Activated CD4-positive, alpha-beta T cell treated with anti-CD3 and anti-CD28 coated beads for 36 hours (primary cell): ENCODE measurements at regions of chr4 and their contacts with region 1.

Region 1: GRCh38 chr4:18021722-18022571 is at the start of gene LCORL:
- DNase-seq: peak; percentile 91
- ATAC-seq: peak; percentile 88
- H3K4me3 Mint-ChIP-seq: peak within 1 kb of the TSS; percentile 98
- H3K27ac Mint-ChIP-seq: peak within 1 kb of the TSS; percentile 91
- H3K4me1 Mint-ChIP-seq: peaks cover 13% of the 10 kb centered on the region
- H3K27me3 Mint-ChIP-seq: peaks cover 25% of the 10 kb centered on the region
- total RNA-seq, gene LCORL: 6.7 to 8.0 TPM

Region 2: GRCh38 chr4:17511950-17512795 is 509.8 kb before region 1 on chr4 and contains the start of gene QDPR:
- CTCF ChIA-PET with region 1: no interaction called
- POLR2A ChIA-PET with region 1: no interaction called
- intact Hi-C with region 1: loop called (anchors 5 kb)
- DNase-seq: peak; percentile 88
- ATAC-seq: peak; percentile 95
- H3K4me3 Mint-ChIP-seq: peak within 1 kb of the TSS; percentile 78
- H3K27ac Mint-ChIP-seq: peak within 1 kb of the TSS; percentile 85
- H3K4me1 Mint-ChIP-seq: peaks cover 23% of the 10 kb centered on the region
- H3K27me3 Mint-ChIP-seq: no peaks in the 10 kb centered on the region
- total RNA-seq, gene QDPR: 34.5 to 34.6 TPM

Region 3: DNA sequence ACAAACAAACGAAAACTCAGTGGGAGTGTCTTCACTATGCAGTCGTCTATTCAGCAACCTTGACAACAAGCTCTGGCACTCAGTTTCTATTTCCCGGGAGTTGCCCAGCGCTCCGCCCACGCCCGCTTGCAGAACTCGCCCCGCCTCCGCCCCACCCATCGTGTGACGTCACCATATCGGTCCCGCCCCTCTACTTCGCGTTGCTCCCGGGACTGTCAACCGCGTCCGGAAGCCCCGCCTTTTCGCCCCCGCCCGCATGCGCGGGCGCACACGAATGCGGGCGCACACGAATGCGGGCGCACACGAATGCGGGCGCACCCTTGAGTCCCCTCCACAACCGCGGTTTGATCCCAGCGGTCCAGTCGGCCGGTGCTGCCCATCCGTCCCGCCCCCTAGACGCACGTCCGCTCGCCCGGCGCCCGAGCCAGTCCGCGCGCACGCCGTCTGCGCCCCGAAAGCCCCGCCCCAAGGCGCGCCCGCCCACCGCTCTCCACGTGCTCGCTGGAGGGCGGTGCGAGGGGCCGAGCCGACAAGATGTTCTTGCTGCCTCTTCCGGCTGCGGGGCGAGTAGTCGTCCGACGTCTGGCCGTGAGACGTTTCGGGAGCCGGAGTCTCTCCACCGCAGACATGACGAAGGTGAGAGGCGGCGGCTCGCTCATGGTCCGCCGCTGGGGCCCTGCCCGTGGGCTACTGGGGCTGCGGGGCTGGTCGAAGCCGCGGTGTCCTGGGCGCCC is 444.8 kb before region 1 on chr4 and contains the start of gene LAP3:
- CTCF ChIA-PET with region 1: no interaction called
- POLR2A ChIA-PET with region 1: no interaction called
- intact Hi-C with region 1: loop called (anchors 1 kb)
- DNase-seq: peak; percentile 99
- ATAC-seq: peak; percentile 85
- H3K4me3 Mint-ChIP-seq: peak within 1 kb of the TSS; percentile 91
- H3K27ac Mint-ChIP-seq: peak within 1 kb of the TSS; percentile 94
- H3K4me1 Mint-ChIP-seq: peaks cover 29% of the 10 kb centered on the region
- H3K27me3 Mint-ChIP-seq: no peaks in the 10 kb centered on the region
- total RNA-seq, gene LAP3: 126 to 128 TPM

Region 4: GRCh38 chr4:17997129-17997528 is 24.8 kb before region 1 on chr4:
- CTCF ChIA-PET with region 1: no interaction called
- POLR2A ChIA-PET with region 1: no interaction called
- intact Hi-C with region 1: no loop called
- DNase-seq: no peak
- ATAC-seq: no peak
- H3K4me3 Mint-ChIP-seq: no peak overlapping the region
- H3K27ac Mint-ChIP-seq: no peak overlapping the region
- H3K4me1 Mint-ChIP-seq: no peaks in the 10 kb centered on the region
- H3K27me3 Mint-ChIP-seq: no peaks in the 10 kb centered on the region

Region 5: DNA sequence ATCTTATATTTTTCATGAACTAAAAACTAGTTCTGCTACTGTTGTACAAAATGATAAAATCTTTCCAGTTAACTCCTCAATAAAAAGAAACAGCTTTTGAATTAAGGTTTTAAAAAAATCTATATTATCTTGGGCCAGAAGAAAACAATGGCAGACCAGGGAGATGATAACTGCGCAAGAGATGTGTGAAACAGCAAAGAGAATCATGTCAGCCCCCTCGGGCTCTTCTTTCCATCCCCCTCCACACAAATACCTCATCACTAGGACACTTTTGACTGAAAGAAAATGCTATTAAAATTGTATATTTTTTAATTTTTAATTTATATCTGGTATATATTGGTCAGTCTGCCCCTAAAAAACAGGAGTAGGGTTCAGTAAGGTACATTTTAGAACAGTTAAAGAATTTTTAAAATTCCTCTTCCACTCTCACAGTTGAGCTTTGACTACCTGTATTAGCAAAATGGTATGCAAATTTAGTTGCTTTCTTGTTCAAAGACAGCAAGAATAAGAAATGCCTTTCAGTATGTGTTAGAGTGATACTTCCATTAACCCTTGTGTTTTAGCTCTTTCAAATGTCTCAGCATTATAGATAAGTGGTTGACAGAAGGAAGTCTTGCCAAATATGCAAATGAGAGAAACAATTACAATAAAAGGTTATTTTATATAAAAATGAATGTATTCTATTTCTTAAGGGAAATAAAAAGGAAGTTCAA is 36.0 kb after region 1 on chr4:
- CTCF ChIA-PET with region 1: no interaction called
- POLR2A ChIA-PET with region 1: no interaction called
- intact Hi-C with region 1: loop called (anchors 1 kb)
- DNase-seq: no peak
- ATAC-seq: no peak
- H3K4me3 Mint-ChIP-seq: no peak overlapping the region
- H3K27ac Mint-ChIP-seq: no peak overlapping the region
- H3K4me1 Mint-ChIP-seq: peaks cover 17% of the 10 kb centered on the region
- H3K27me3 Mint-ChIP-seq: peaks cover 36% of the 10 kb centered on the region